ENCODE measurements at regions of chr17 and their contacts with region 1.

Region 1: GRCh38 chr17:55303701-55304145 is 39.0 kb downstream of the HLF start:
- DNase-seq: no peak
- ATAC-seq: no peak
- H3K4me3 ChIP-seq: no peak overlapping the region; a peak in 1 of 6 replicates
- H3K27ac ChIP-seq: peak overlapping the region; percentile 86
- H3K4me1 ChIP-seq: peaks cover 100% of the 10 kb centered on the region
- H3K27me3 ChIP-seq: no peaks in the 10 kb centered on the region
- CTCF ChIP-seq: peak; percentile 4; the same call in 1 of the 2 replicates
- EP300 ChIP-seq: no peak
- POLR2A ChIP-seq: no peak; a peak in 2 of 4 replicates
- RAD21 ChIP-seq: no peak

Region 2: DNA sequence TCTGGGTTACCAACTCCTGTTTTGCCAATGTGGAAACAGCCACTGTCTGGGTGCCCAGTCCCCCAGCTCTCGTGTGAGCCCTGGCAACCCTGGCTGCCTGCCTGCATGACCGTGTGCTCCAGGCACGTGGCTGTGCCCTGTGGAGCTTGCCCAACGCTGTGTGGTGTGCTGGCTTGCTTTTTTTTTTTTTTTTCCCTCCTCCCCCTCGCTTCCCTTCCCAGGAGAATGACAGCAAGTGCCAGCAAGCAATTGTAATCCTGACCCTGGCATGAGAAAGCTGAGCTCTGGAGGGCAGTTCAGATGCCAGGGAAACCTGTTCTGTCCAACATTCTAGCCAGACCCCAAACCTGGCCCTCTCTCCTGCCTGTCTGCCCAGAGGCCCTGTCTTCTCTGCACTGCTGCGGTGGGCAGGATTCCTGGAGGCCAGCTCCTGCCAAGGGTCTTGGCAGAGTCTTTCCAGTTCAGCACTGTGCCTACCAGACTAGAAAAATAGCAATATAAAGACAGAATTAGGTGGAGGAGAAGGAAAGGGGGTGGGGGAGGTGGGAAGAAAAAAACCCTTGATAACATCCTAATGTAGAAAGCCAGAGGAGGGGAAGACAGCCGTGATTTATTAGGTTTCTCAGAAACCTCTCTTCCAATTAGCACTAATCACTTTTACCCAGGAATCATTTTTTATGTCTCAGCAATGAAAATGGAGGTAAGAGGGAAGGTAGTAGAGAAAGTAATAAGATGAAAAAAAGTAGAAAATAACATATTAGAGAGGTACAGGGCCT is 30.0 kb before region 1 on chr17:
- CTCF ChIA-PET with region 1: no interaction called
- POLR2A ChIA-PET with region 1: interaction called, 15 read pairs
- in situ Hi-C with region 1: no loop called
- intact Hi-C with region 1: no loop called
- DNase-seq: no peak
- ATAC-seq: peak; percentile 46
- H3K4me3 ChIP-seq: peak overlapping the region; percentile 81 to 93 (median 83)
- H3K27ac ChIP-seq: peak overlapping the region; percentile 84
- H3K4me1 ChIP-seq: peaks cover 72% of the 10 kb centered on the region
- H3K27me3 ChIP-seq: peaks cover 0 to 3% of the 10 kb centered on the region in 2 experiments; a peak in 1 of 5 replicates
- CTCF ChIP-seq: 0 out of 2 replicates have a peak, but pooled peaks have one; percentile 6
- EP300 ChIP-seq: no peak
- POLR2A ChIP-seq: peak in 1 of 2 experiments; percentile 48; a peak in 1 of 4 replicates
- RAD21 ChIP-seq: 0 out of 2 replicates have a peak, but pooled peaks have one; percentile 14